ENCODE measurements at regions of chr15 and their contacts with region 1.

Region 1: GRCh38 chr15:26648676-26649075 is 124.2 kb downstream of the GABRB3 start:
- DNase-seq: no peak

Region 2: GRCh38 chr15:24756101-24756500 is 1892.6 kb before region 1 on chr15:
- intact Hi-C with region 1: loop called in 1 of 2 experiments (anchors 5 kb)
- DNase-seq: no peak

Region 3: DNA sequence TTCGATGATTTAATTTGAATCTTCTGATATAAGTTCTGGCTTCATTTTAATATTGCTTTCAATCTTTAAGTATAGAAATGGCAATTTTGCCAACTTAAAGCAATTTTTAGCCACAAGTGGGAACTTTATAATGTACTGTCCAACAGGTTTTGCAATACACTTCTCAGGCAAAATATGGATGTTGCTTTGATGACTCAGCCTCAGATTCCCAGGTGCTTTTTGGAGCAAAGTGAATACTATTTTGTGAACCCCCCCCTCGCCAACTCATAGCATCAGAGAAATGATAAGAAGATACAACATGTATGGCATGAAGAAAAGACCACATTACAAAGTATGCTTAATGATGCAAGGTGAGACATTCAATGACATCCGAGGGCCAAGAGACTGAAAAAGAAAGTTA is 33.9 kb before region 1 on chr15:
- intact Hi-C with region 1: no loop called
- DNase-seq: no peak

Measured in posterior vena cava (tissue), 2 donors.